ENCODE measurements at regions of chr6 and their contacts with region 1.

Region 1: DNA sequence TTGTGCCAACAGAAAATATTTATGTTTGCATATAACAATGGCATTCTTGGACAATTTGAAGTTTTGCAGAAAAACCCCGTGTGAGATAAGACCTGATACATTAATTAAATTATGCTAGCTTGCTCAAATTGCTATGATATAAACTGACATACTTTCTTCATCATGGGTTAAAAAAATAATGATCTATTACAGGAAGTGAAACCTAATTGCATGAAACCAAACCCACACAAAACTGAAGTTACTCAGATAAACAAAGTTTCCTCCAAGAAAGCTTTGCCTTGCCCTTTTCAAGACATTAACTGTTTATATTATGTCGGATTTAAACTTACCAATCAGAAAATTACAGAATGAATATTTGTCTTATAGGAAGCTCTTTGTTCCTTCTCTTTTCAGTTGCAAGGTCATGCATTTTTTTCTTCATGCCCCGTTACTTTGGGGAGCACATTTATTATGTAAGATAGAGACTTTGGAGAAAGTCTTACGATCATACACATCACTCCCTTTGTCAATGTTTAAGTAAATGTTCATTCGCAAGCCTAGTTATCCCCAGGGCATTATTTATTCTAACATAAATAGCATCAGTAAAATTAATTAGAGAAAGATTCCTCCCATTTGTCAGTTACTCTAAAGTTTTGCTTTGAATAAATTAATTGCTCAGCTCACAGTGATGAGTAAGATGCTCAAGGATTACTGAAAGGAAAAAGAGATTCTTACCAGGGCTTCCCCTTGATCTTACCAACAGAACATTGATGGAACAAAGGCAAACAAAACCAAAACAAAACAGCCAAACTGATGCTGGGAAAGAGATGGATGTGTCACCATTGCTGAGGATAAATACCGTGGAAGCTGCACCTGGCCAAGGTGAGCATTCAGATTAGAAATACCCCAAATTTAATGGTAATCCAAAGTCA is 14.8 kb upstream of the TMEM244 start:
- DNase-seq: no peak
- H3K4me3 Mint-ChIP-seq: no peak overlapping the region
- H3K27ac Mint-ChIP-seq: no peak overlapping the region
- H3K4me1 Mint-ChIP-seq: peaks cover 21% of the 10 kb centered on the region
- H3K27me3 Mint-ChIP-seq: peaks cover 2% of the 10 kb centered on the region

Region 2: GRCh38 chr6:129860908-129861665 is 14.8 kb before region 1 on chr6 and contains the start of gene TMEM244:
- CTCF ChIA-PET with region 1: no interaction called
- POLR2A ChIA-PET with region 1: interaction called, 4 read pairs
- intact Hi-C with region 1: loop called (anchors 2 kb)
- DNase-seq: peak; percentile 26
- H3K4me3 Mint-ChIP-seq: peak within 1 kb of the TSS; percentile 41
- H3K27ac Mint-ChIP-seq: peak within 1 kb of the TSS; percentile 19
- H3K4me1 Mint-ChIP-seq: peaks cover 14% of the 10 kb centered on the region
- H3K27me3 Mint-ChIP-seq: no peaks in the 10 kb centered on the region
- total RNA-seq, gene TMEM244: not detected

Region 3: DNA sequence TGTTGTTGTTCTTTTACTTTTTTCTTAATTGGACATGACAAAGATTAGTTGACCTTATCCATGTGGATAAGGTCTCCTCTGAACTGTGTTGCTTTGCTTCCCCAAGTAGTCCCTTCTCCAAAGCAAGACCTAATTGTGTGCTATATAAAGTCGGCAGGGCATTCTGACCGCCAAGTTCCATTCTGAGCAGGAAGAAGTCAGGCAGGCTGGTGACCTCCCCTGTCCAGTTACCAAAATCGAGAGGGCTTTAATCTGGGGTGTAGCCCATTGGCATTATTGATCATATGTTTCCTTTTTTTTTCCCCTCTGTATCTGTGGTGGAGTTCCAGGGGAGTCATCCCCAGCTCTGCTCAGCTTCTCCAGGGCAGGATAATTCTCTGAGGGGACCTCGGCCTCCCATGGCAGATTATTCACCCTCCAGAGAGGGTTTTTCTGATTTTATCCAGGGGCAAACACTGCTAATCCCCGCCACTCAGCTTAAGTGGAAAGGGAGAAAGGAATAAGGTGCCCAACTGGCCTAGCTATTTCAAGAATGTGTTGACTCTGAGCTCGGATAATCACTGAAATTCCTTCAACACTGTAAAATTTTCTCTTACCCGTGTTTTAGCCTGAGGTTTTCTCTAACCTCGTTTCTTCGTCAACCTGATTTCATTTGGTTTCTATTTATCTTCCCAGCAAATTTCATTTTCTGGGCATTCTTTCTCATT is 70.7 kb after region 1 on chr6:
- CTCF ChIA-PET with region 1: no interaction called
- POLR2A ChIA-PET with region 1: no interaction called
- intact Hi-C with region 1: no loop called
- DNase-seq: no peak
- H3K4me3 Mint-ChIP-seq: no peak overlapping the region
- H3K27ac Mint-ChIP-seq: no peak overlapping the region
- H3K4me1 Mint-ChIP-seq: no peaks in the 10 kb centered on the region
- H3K27me3 Mint-ChIP-seq: peaks cover 7% of the 10 kb centered on the region

Measured in activated CD4-positive, alpha-beta memory T cell treated with anti-CD3 and anti-CD28 coated beads for 36 hours (primary cell).